Aorta (tissue), 5 donors: ENCODE measurements at regions of chrX and their contacts with region 1.

Region 1: DNA sequence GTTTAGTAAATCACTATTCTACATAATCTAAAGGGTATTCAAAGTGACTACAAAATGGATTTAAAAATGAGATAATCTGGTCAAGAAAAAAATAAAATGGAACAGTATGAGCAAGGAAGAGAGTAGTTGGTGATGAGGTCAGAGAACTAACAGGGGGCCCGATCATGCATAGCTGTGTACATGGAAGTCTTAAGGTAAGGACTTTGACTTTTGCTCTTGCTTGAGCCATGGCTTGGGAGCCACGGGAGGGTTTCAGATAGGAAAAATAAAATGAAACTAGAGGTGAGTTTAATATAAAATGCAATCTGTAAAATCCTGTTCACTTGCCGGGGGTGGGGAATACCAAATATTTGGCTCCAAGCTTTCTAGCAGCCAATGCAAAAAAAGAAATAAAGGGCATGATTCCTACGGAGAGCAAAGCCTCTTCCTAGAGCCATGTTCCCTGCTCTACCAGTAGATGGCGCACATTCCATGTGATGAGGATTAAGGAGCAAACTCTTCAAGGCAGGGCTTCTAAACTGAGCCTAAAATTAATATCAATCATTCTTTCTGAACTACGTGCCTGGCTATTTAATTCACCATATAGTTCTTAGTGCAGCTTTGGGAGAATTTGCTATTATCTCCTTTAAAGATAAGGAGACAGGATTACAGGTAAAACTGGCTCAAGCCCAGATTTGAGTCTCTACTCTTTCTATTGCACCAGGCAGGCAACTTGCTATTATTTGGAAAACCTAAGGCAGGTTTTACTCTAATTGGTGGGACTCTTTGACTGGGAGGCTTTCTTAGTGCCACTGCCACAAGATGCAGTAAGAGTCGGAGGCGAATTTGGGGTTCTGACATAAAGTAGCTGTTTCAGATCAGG is 6.8 kb upstream of the CLCN5 start:
- DNase-seq: no peak
- ATAC-seq: peak; percentile 78
- H3K4me3 ChIP-seq: no peak overlapping the region
- H3K27ac ChIP-seq: no peak overlapping the region
- H3K4me1 ChIP-seq: peaks cover 0 to 3% of the 10 kb centered on the region in 2 donors
- H3K27me3 ChIP-seq: no peaks in the 10 kb centered on the region

Region 2: DNA sequence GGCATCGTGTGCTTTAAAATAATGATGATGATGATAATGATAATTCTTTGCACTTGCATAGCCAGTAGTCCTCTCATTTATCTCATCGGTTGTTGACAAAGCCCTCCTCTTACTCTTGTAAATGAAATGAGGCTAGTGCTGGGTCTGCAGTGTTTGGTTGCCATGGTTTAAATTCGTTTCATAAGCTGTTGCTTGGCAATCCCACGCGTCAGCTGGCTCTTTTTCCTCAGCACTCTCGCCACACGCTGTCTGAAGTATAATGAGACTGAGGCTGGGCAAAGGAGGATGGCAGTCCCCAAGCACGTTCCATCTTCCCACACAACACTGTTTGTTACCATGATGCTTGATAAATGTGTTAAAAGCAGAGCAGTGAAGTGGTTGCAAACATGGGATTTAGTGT is 71.0 kb before region 1 on chrX:
- intact Hi-C with region 1: no loop called
- DNase-seq: no peak
- ATAC-seq: no peak
- H3K4me3 ChIP-seq: no peak overlapping the region
- H3K27ac ChIP-seq: no peak overlapping the region
- H3K4me1 ChIP-seq: no peaks in the 10 kb centered on the region
- H3K27me3 ChIP-seq: no peaks in the 10 kb centered on the region

Region 3: GRCh38 chrX:50081282-50081889 is 165.8 kb after region 1 on chrX:
- intact Hi-C with region 1: loop called in 1 of 2 experiments (anchors 5 kb)
- DNase-seq: no peak
- ATAC-seq: no peak
- H3K4me3 ChIP-seq: no peak overlapping the region
- H3K27ac ChIP-seq: no peak overlapping the region
- H3K4me1 ChIP-seq: no peaks in the 10 kb centered on the region
- H3K27me3 ChIP-seq: no peaks in the 10 kb centered on the region

Region 4: GRCh38 chrX:50579955-50580354 is 664.4 kb after region 1 on chrX:
- intact Hi-C with region 1: loop called in 1 of 2 experiments (anchors 5 kb)
- DNase-seq: no peak
- ATAC-seq: no peak
- H3K4me3 ChIP-seq: no peak overlapping the region
- H3K27ac ChIP-seq: no peak overlapping the region
- H3K4me1 ChIP-seq: no peaks in the 10 kb centered on the region
- H3K27me3 ChIP-seq: no peaks in the 10 kb centered on the region